ENCODE measurements at regions of chr12 and their contacts with region 1.

Region 1: DNA sequence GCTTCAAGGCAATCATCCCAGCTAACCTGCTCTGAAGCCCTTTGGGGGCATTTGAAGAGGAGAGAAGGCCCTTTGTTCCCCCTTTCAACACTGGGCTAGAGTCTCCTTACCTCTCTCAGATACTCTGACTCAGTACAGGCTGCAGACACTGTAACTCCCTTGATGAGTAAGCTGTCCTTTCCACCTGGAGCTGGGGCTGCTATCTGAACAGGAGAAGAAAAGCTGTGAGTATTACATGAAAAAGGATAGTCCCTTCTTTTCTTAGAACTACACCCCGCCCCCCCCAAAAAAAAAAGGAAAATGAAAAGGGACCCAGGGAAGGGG is 186.6 kb upstream of the PLEKHG7 start:
- DNase-seq: no peak
- H3K4me3 Mint-ChIP-seq: no peak overlapping the region
- H3K27ac Mint-ChIP-seq: no peak overlapping the region
- H3K4me1 Mint-ChIP-seq: peaks cover 15% of the 10 kb centered on the region
- H3K27me3 Mint-ChIP-seq: no peaks in the 10 kb centered on the region

Region 2: GRCh38 chr12:92537290-92537960 is 21.2 kb after region 1 on chr12:
- CTCF ChIA-PET with region 1: interaction called, 4 read pairs
- POLR2A ChIA-PET with region 1: interaction called, 11 read pairs
- DNase-seq: no peak
- H3K4me3 Mint-ChIP-seq: no peak overlapping the region
- H3K27ac Mint-ChIP-seq: peak overlapping the region; percentile 79
- H3K4me1 Mint-ChIP-seq: peaks cover 55% of the 10 kb centered on the region
- H3K27me3 Mint-ChIP-seq: no peaks in the 10 kb centered on the region

Measured in activated CD4-positive, alpha-beta T cell treated with anti-CD3 and anti-CD28 coated beads, Interleukin-2, amount 10 ng/mL, durations not matched to agents 7 days and 5 days (primary cell).